Posterior vena cava (tissue), 2 donors: ENCODE measurements at regions of chr4 and their contacts with region 1.

Region 1: GRCh38 chr4:76879731-76880364 is 18.1 kb downstream of the SOWAHB start:
- DNase-seq: no peak

Region 2: DNA sequence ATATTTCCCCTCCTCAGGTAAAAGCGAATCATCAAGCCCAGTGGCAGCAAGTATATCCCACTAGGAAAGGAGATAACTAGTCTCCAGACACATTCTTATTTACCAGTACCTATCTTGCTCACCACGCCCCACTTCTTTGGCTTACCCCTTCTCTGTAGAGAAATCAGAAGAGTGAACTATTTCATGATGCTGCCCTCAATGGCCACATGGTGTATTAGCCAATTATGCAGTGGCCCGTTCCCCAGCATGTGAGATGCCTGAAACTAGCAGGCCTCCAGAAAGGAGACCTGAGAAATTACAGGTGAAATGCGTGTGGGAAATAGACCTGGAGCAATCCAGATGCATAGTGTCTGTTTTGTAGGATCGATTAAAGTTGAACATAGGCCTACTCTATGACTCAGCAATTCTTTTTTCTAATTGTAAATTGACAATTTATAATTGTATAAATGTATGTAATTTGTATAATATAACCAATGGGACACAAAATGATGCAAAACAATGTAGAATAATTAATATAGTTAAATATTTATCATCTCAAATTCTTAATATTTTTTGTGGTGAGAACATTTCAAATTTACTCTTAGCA is 813.1 kb after region 1 on chr4:
- intact Hi-C with region 1: loop called in 1 of 2 experiments (anchors 5 kb)
- DNase-seq: no peak